Lower leg skin (tissue), 4 donors: ENCODE measurements at regions of chr17 and their contacts with region 1.

Region 1: DNA sequence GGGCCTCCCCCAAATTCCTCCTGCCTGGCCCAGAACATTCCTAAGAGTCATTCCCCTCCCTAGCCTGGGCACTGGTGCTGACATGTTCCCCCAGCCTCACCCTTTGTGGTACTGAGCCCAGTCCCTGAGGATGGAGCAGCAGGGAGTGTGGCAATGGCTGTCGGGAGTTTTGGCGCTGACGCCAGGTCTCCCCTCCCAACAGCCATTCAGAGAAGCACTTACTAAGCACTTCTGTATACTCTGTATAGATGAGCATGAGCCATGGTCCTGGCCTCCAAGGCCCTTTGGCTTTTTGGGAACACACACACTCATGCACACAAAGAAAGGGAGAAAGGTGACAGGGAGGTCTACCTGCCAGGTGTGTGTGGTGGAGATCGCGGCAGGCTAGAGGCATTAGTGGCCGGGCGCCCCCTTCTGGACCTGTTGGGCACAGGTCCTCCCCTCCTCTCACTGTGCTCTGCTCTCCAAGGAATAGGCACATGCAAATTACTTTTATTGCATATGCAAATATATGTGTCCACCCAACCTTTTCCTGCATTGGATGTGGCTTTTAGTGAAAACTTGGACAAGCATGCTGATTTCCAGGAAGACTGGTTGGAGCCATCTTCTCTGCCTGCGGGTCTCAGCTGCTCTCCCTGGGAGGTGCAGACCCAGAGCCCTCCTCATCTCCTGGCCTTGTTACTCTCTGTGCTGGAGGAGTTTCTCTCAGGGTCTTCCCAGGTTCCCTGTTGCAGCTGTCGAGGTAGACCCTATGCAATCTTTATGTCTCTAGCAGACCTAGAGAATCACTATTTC is 17.4 kb upstream of the C17orf107 start:
- DNase-seq: no peak
- H3K4me3 ChIP-seq: no peak overlapping the region
- CTCF ChIP-seq: no peak
- POLR2A ChIP-seq: no peak

Region 2: DNA sequence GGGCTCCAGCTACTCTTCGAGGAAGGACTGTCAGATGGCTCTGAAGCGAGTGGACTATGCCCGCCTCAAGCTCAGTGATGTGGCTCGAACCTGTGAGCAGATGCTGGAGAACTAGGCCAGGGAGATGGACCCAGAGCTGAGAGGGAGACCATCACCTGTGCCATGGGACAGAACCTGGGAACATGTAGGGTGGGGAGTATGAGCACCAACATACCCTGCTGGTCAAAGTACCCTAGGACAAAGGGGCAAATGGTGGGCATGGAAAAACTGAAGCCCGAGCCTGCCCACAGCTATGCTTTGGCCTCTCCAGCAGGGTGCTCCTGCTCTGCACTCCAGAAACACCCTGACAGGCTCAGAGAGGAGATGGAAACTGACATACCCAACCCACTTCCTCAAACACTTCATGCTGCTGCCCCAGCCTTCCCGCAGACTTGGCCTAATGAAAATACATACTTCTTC is 148.9 kb before region 1 on chr17:
- intact Hi-C with region 1: loop called (anchors 5 kb)
- DNase-seq: no peak
- H3K4me3 ChIP-seq: no peak overlapping the region
- CTCF ChIP-seq: no peak
- POLR2A ChIP-seq: no peak

Region 3: GRCh38 chr17:4789901-4790704 is 91.9 kb before region 1 on chr17:
- intact Hi-C with region 1: loop called (anchors 5 kb)
- DNase-seq: peak; percentile 78 to 96
- H3K4me3 ChIP-seq: peak overlapping the region; percentile 43
- CTCF ChIP-seq: peak in 1 of 3 donors; percentile 23
- POLR2A ChIP-seq: peak in 1 of 2 donors; percentile 48

Region 4: DNA sequence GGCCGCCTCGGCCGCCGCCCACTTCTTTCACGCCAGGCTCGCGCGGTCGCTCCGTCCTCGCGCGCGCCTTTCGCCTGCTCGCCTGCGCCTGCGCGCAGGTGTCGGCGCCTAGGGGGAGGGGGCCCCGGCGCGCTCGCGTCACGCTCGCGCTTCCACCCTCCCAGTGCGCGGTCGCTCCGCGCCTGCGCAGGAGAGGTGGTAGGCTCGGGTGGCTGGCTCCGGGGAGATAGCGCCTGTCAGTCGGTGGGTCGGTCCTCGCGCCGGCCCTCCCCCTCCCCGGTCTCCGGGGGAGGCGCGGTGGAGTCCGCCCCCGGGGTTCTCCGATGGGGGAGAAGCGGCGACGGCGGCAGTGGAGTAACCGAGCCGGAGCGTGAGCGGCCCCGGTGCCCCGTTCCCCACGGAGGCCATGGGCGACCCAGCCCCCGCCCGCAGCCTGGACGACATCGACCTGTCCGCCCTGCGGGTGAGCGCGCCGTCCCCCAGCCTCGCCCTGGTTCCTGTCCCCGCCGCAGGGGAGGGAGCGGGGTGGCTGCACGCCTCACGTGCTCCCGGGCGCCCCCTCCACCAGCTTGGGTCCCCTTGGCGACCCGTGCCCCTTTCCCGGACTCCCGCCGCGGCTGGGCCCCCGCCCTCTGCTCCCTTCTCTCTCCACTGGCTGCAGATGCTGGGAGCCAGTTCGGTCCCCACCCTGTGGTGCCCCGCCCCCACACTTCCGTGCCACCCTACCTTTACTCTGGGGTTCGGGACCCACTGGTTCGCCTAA is 48.6 kb before region 1 on chr17 and contains the start of gene MINK1:
- intact Hi-C with region 1: no loop called
- DNase-seq: peak; percentile 80 to 96
- H3K4me3 ChIP-seq: peak within 1 kb of the TSS; percentile 78
- CTCF ChIP-seq: no peak
- POLR2A ChIP-seq: no peak
- total RNA-seq, gene MINK1: 128 to 208 (median 140) TPM